Activated naive CD4-positive, alpha-beta T cell treated with anti-CD3 and anti-CD28 coated beads for 36 hours (primary cell): ENCODE measurements at regions of chr7 and their contacts with region 1.

Region 1: DNA sequence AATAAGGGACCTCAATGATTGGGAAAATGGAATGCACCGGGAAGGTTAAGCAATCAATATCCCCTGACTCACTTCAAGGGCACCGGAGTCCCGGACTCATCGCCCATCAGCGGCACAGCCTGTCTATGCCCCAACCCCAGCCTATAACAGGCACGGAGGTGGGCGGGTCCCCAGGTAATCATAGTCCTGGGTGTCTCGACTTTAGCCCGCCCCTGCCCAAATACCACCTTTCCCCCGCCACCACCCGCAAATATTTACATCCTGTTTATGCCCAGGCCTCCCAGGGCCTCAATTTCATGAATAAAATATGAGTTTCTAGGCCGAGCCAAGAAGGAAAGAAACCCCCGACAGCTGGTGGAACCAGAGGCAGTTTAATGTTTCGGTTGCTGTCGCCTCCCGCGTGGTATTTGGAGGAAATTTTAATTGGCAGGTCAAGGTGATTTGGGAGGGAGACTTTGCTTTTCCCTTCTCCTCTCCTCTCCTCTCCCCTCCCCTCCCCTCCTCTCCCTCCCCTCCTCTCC is 15.6 kb upstream of the RFC2 start:
- DNase-seq: peak; percentile 74
- H3K4me3 Mint-ChIP-seq: peak overlapping the region; percentile 73
- H3K27ac Mint-ChIP-seq: no peak overlapping the region
- H3K4me1 Mint-ChIP-seq: peaks cover 11% of the 10 kb centered on the region
- H3K27me3 Mint-ChIP-seq: peaks cover 5% of the 10 kb centered on the region

Region 2: DNA sequence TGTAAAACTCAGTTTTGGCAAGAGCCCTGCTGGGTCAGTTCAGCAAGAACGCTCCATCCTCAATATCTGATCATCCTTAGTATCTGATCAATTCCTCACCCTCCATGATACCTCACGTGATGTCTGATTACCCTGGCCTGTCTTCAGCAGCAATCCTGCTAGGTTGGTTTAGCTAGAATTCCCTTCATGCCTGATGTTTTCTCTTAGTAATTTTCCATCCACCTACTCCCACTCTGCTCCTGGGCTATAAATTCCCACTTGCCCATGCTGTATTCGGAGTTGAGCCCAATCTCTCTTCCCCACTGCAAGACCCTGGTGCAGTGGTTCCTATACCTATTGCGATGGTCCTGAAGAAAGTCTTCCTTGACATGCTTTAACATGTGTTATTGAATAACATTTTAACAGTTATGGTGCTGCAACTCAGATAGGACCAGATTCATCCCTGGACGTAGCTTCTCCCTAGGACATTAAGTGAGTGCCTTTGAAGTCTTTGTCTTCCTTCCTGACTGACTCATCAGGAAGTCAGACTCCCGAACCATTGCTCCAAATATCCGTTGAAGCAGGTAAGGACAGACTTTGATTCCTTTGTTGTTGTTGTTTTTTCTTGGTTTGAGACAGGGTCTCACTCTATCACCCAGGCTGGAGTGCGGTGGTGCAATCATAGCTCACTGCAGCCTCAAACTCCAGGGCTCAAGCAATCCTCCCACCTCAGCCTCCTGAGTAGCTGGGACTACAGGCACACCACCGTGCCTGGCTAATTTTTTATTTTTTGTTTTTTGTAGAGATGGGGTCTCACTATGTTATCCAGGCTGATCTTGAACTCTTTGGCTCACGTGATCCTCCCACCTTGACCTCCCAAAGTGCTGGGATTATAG is 470.3 kb before region 1 on chr7:
- CTCF ChIA-PET with region 1: no interaction called
- intact Hi-C with region 1: no loop called
- DNase-seq: no peak
- H3K4me3 Mint-ChIP-seq: no peak overlapping the region
- H3K27ac Mint-ChIP-seq: no peak overlapping the region
- H3K4me1 Mint-ChIP-seq: no peaks in the 10 kb centered on the region
- H3K27me3 Mint-ChIP-seq: peaks cover 2% of the 10 kb centered on the region

Region 3: GRCh38 chr7:74289018-74289658 is 19.3 kb after region 1 on chr7 and contains the start of gene CLIP2:
- CTCF ChIA-PET with region 1: interaction called, 4 read pairs
- intact Hi-C with region 1: loop called (anchors 1 kb)
- DNase-seq: peak; percentile 74
- H3K4me3 Mint-ChIP-seq: peak within 1 kb of the TSS; percentile 73
- H3K27ac Mint-ChIP-seq: no peak within 1 kb of the TSS
- H3K4me1 Mint-ChIP-seq: peaks cover 11% of the 10 kb centered on the region
- H3K27me3 Mint-ChIP-seq: peaks cover 12% of the 10 kb centered on the region
- total RNA-seq, gene CLIP2: 1.2 to 1.6 TPM

Region 4: DNA sequence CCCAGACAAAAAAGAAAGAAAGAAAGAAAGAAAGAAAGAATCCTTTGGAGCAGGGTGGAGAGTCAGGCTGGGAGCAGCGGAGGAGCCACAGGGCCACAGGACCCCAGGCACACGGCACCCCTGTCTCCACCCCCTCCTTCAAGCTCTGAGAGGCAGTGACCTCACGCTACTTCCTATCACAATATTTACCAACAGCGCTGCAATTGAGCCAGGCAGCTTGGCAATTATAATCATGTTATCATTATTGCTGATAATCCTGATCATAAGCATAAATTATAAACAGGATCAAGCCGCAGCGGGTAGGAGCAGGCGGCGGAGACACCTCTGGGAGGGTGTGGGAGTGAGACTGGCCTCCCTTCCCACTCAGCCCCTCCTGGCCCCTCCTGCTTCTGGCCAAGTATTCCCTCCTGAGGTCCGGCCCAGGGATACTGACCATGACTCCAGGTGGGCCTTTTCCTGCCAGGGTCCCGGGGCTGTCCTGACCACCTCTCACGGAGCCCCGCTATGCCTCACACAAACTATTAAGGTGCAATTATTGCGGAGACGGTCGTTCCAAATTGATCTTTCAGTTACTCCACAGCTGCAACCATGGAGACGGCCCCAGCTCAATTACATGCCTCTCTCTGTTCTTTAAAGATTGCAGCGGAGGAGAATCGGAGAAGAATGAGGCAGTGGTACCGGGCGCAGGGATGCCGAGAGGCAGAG is 173.9 kb after region 1 on chr7:
- CTCF ChIA-PET with region 1: no interaction called
- intact Hi-C with region 1: no loop called
- DNase-seq: no peak
- H3K4me3 Mint-ChIP-seq: no peak overlapping the region
- H3K27ac Mint-ChIP-seq: no peak overlapping the region
- H3K4me1 Mint-ChIP-seq: no peaks in the 10 kb centered on the region
- H3K27me3 Mint-ChIP-seq: no peaks in the 10 kb centered on the region